Psoas muscle (tissue), 8 donors: ENCODE measurements at regions of chr7 and their contacts with region 1.

Region 1: DNA sequence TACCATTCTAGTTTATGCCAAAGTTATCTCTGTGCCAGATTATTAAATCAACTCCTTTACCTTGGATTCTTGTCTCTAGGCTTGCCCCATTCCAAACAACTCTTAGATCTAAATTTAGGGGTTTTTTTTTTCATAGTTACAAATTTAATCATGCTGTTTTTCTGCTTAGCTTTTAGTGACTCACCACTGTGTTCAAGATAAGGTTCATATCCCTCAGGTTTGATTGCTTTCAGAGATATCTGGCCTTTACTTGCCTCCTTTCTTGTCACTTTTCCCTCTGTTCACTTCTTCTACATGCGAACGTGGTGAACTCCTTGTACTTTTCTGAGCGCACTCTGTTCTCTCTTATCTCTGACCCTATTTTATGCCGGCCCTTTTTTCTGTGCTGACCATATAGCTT is 78.2 kb downstream of the VPS50 start:
- DNase-seq: no peak
- ATAC-seq: no peak
- H3K4me3 ChIP-seq: no peak overlapping the region
- H3K27ac ChIP-seq: no peak overlapping the region
- H3K4me1 ChIP-seq: no peaks in the 10 kb centered on the region
- H3K27me3 ChIP-seq: no peaks in the 10 kb centered on the region
- CTCF ChIP-seq: no peak

Region 2: GRCh38 chr7:93245525-93246432 is 64.6 kb before region 1 on chr7:
- intact Hi-C with region 1: no loop called
- DNase-seq: no peak
- ATAC-seq: peak in 2 of 4 donors; percentile 30 to 40
- H3K4me3 ChIP-seq: no peak overlapping the region
- H3K27ac ChIP-seq: no peak overlapping the region
- H3K4me1 ChIP-seq: no peaks in the 10 kb centered on the region
- H3K27me3 ChIP-seq: no peaks in the 10 kb centered on the region
- CTCF ChIP-seq: peak; percentile 61

Region 3: GRCh38 chr7:93817526-93817925 is 507.2 kb after region 1 on chr7:
- intact Hi-C with region 1: loop called in 1 of 2 experiments (anchors 5 kb)
- DNase-seq: no peak
- ATAC-seq: no peak
- H3K4me3 ChIP-seq: no peak overlapping the region
- H3K27ac ChIP-seq: no peak overlapping the region
- H3K4me1 ChIP-seq: no peaks in the 10 kb centered on the region
- H3K27me3 ChIP-seq: no peaks in the 10 kb centered on the region
- CTCF ChIP-seq: no peak